AG04449 (cell line): ENCODE measurements at regions of chr7 and their contacts with region 1.

Region 1: GRCh38 chr7:23055582-23056178 is 41.8 kb upstream of the HYCC1 start:
- DNase-seq: no peak
- H3K4me3 ChIP-seq: no peak overlapping the region
- CTCF ChIP-seq: peak; percentile 76

Region 2: DNA sequence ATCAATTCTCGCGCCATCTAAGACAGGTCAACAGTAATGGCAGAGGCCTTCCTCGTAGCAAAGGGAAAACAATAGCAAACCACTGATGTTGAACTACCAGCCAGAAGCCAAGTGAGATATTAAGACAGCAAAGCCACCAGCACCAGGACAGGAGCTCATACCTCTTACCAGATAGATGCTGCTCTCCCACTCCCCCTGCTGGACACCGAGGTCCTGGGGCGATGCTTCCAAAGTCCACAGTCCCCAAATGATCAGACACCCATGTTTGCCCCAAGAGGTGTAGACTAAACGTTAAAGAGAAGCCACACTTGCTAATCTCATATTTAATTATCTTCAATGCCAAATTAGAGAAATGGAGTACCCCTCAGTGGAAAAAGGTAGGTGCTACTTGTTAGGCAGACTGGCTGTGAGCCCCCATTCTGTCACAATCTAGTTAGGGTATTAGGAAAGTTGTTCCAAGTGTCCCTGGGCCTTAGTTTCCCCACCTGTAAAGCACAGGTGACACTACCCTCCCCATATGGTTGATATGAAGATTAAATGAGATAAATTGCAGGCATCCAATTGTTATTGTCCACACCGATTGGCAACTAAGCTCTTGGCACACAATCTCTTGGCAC is 273.0 kb before region 1 on chr7:
- CTCF ChIA-PET with region 1: interaction called, 27 read pairs
- POLR2A ChIA-PET with region 1: no interaction called
- DNase-seq: no peak
- H3K4me3 ChIP-seq: no peak overlapping the region
- CTCF ChIP-seq: peak; percentile 62

Region 3: DNA sequence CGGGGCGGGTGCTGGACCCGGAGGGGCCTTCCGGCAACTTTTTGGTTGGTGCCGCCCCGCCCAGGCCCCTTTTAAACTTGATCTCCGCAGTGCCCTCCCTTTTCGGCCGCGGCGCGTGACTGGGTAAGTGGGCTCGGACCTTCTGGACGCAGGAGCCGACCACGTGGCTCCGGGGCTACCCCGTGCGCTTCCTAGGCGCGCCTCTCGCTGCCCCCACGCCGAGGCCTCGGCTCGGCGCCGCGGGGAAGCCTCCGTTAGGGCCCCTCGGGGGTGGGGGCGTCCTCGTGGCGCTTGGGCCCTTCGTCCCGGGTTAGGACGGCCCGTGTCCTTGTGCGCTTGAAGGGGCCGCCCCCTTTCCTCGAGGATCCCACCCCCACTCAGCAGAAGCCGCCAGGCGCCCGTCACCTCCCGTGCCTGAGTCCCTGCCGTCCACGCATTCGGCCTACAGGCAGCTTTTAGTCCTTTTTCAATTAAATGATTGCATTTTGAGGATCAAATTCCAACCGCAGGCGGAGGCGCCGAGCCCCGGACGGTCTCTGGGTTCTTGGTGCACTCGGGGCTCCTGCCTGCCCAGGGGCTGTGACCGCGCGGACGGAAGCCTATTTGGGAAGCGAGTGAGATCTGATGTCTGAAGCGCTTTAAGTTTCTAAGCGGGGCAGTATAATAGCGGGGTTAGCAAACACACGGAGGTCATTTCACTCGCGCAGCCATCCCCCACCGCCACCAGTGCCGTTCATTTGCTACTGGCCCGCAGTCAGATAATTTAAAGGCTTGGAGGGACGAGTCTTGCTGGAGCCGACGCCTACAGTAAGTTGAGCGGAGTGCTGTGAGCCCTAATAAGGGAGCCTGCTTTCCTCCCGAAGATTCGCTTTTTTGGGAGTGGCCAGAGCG is 201.3 kb before region 1 on chr7:
- CTCF ChIA-PET with region 1: interaction called, 22 read pairs
- POLR2A ChIA-PET with region 1: no interaction called
- DNase-seq: no peak
- H3K4me3 ChIP-seq: peak overlapping the region; percentile 66
- CTCF ChIP-seq: no peak

Region 4: GRCh38 chr7:22871661-22872060 is 184.0 kb before region 1 on chr7:
- CTCF ChIA-PET with region 1: interaction called, 12 read pairs
- POLR2A ChIA-PET with region 1: no interaction called
- DNase-seq: no peak
- H3K4me3 ChIP-seq: no peak overlapping the region
- CTCF ChIP-seq: no peak

Region 5: DNA sequence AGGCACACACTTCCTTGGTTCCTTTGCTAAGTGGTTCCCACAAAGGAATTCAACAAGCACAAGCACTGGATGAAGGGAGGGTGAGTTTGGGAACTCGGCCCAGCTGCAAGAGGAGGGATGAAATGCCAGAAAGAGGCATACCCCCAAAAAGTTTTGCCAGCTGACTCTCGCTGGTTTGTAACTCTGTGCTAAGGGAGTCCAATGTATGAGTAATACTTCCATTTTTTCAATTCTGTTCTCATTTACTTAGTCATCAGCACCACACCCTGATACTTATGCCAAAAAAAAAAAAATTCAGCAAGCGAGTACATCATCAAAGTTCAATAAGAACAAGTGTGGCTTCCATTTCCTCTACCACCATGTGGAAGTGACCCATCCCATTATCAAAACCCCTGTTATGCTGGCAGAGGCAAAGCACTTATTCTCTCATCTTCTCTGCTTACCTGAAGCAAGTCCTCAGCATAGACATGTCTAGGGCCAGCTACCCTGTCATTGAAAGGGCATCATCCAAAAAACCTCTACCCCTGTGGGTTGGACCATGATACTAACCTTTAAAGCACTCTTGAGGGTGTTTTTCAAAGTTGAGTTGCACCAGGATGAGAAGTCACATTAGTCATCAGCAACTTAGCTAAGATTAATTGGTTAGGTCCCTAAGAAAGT is 34.8 kb before region 1 on chr7:
- CTCF ChIA-PET with region 1: interaction called, 13 read pairs
- POLR2A ChIA-PET with region 1: no interaction called
- DNase-seq: peak; percentile 45
- H3K4me3 ChIP-seq: no peak overlapping the region
- CTCF ChIP-seq: no peak

Region 6: GRCh38 chr7:23072048-23072447 is 16.4 kb after region 1 on chr7:
- CTCF ChIA-PET with region 1: interaction called, 14 read pairs
- POLR2A ChIA-PET with region 1: no interaction called
- DNase-seq: no peak
- H3K4me3 ChIP-seq: no peak overlapping the region
- CTCF ChIP-seq: no peak

Region 7: DNA sequence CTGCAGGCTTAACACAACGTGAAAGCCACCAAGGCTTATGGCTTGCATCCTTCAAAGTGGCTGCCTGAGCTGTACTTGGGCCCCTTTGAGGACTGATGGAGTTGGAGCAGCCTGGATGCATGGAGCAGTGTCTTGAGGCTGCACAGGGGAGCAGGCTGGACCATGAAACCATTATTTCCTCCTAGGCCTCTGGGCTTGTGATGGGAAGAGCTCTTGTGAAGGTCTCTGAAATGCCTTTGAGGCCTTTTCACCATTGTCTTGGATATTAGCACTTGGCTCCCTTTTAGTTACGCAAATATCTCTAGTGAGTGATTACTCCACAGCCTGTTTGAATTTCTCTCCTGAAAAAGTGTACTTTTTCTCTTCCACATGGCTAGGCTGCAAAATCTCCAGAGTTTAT is 1027.1 kb after region 1 on chr7:
- CTCF ChIA-PET with region 1: no interaction called
- POLR2A ChIA-PET with region 1: no interaction called
- DNase-seq: no peak
- H3K4me3 ChIP-seq: no peak overlapping the region
- CTCF ChIP-seq: no peak